HepG2 (cell line): ENCODE measurements at regions of chr1 and their contacts with region 1.

Region 1: DNA sequence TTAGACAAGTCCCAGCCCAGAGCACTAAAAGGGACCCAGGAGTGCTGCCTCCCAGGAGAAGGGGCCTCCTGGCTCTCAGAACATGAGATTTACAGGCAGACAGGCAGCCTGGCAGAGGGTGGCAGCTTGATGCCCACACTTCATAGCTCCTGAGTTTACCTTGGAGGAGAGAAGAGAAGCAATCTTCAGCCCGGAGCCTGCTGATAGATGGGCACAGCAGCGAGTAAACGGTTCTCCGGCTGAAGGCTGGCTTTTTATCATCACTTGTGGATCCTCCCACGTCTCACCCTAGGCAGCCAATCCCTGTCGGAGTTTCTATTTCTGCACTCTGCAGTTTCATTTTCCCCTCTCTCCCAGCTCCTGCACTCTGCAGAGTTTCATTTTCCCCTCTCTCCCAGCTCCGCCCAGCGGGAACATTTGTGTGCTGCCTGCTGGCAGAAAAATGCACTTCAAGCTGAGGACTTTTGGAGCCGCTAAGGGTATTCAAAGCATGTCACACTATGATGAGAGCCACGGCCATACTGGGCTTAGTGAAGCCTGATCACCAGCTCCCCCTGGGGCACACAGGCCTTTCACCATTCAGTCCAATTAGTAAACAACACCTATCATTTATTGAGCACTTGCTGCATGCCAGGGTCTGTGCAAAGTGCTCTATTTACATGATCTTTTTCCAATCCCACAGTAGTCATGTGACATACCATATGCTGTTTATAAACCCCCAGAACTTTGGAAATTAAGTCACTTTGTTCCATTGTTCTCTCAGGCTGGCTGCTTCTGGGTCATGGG is at the start of gene IFI6:
- DNase-seq: peak; percentile 96
- ATAC-seq: peak; percentile 98
- H3K4me3 ChIP-seq: peak within 1 kb of the TSS; percentile 48 to 70 (median 61)
- H3K27ac ChIP-seq: peak within 1 kb of the TSS; percentile 58
- H3K4me1 ChIP-seq: peaks cover 40% of the 10 kb centered on the region
- H3K27me3 ChIP-seq: no peaks in the 10 kb centered on the region
- CTCF ChIP-seq: peak; percentile 50
- EP300 ChIP-seq: no peak
- POLR2A ChIP-seq: peak; percentile 56 to 73
- RAD21 ChIP-seq: peak; percentile 29; the same call in 1 of the 2 replicates
- total RNA-seq, gene IFI6: 6.1 and 13.2 TPM in 2 replicates

Region 2: GRCh38 chr1:27616441-27616840 is 55.7 kb before region 1 on chr1:
- CTCF ChIA-PET with region 1: no interaction called
- POLR2A ChIA-PET with region 1: no interaction called
- in situ Hi-C with region 1: no loop called
- intact Hi-C with region 1: no loop called
- DNase-seq: no peak
- ATAC-seq: peak; percentile 26; the same call in 2 of the 3 replicates
- H3K4me3 ChIP-seq: no peak overlapping the region
- H3K27ac ChIP-seq: no peak overlapping the region
- H3K4me1 ChIP-seq: peaks cover 31% of the 10 kb centered on the region
- H3K27me3 ChIP-seq: peaks cover 0 to 16% of the 10 kb centered on the region in 2 experiments; a peak in 3 of 5 replicates
- CTCF ChIP-seq: peak; percentile 26; the same call in 1 of the 2 replicates
- EP300 ChIP-seq: no peak
- POLR2A ChIP-seq: no peak
- RAD21 ChIP-seq: no peak

Region 3: GRCh38 chr1:27719286-27720251 is 47.4 kb after region 1 on chr1:
- CTCF ChIA-PET with region 1: interaction called, 7 read pairs
- POLR2A ChIA-PET with region 1: interaction called, 21 read pairs
- in situ Hi-C with region 1: loop called (anchors 5 kb)
- intact Hi-C with region 1: loop called (anchors 1 kb)
- DNase-seq: no peak
- ATAC-seq: peak; percentile 57
- H3K4me3 ChIP-seq: no peak overlapping the region
- H3K27ac ChIP-seq: no peak overlapping the region
- H3K4me1 ChIP-seq: peaks cover 41% of the 10 kb centered on the region
- H3K27me3 ChIP-seq: no peaks in the 10 kb centered on the region
- CTCF ChIP-seq: no peak
- EP300 ChIP-seq: no peak
- POLR2A ChIP-seq: no peak
- RAD21 ChIP-seq: no peak